ENCODE measurements at regions of chr22 and their contacts with region 1.

Region 1: DNA sequence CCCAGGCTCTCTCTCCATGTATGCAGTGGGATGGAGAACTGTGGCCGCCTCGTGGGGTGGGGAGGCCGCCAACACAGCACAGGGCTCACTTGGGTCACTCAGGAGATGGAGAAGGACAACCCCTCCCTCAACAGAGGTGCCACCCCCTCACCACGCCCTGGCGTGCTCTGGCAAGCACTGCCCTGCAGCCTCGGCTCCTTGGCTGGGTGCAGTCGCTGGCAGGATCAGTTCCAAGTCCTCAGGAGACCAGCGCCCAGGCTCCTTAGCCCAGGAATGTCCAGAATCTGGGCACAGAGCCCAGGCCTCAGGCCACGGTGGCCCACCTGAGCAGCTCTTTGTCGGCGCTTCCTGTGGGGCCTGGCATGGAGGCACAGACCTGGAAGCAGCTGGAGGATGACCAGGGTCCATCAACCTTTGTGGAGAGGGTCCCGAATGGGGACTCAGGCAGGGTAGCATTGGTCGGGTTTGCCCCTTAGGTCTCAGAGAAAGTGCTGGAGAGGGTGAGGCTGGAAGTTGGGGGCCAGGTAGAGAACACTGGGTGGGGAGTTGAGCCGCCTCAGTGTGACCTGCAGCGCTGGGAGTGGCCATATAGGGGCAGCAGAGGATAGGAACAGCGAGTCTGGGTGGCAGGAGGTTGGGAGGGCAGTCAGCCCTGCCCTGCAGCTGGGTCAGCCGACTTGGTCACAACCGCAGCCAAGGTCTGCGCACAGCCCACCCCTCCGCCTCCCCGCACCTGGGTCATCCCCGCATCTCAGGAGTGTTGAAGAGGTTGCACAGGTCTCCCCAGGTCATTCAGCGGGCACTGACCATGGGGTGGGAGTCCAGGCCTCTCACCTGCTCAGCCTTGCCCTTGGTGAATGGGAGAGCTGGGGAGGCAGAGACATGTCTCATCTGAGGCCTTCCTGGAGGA is 8.2 kb downstream of the SUSD2 start:
- DNase-seq: peak; percentile 86
- ATAC-seq: peak; percentile 97
- H3K4me3 Mint-ChIP-seq: no peak overlapping the region
- H3K27ac Mint-ChIP-seq: no peak overlapping the region
- H3K4me1 Mint-ChIP-seq: peaks cover 3% of the 10 kb centered on the region; the same call in 1 of the 2 replicates
- H3K27me3 Mint-ChIP-seq: no peaks in the 10 kb centered on the region; the same call in 1 of the 2 replicates
- CTCF ChIP-seq: peak; percentile 65; the same call in 1 of the 2 replicates

Region 2: DNA sequence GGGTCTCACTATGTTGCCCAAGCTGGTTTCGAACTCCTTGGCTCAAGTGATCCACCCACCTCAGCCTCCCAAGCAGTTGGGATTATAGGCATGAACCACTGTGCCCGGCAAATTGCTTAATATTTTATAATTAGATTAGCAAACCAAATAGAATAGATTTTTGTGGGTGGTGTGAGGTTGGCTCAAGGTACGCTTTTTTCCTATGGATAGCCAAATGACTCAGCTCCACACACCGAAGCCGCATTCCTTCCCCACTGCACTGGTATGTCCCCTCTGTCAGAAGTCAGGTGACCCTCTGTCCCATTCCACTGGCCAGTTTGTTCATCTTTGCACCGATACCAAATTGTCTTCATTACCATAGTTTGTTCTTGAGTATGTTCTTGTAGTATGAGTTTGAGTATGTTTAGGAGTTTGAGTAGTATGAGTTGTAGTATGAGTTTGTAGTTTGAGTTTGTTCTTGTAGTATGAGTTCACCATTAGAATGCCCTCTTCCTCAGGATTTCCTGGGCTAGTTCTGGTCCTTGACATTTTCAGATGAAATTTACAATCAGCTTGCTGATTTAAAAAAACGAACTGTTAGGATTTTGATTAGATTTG is 11.2 kb after region 1 on chr22:
- CTCF ChIA-PET with region 1: interaction called, 10 read pairs
- POLR2A ChIA-PET with region 1: no interaction called
- DNase-seq: no peak
- ATAC-seq: no peak
- H3K4me3 Mint-ChIP-seq: no peak overlapping the region
- H3K27ac Mint-ChIP-seq: no peak overlapping the region
- H3K4me1 Mint-ChIP-seq: peaks cover 12% of the 10 kb centered on the region; the same call in 1 of the 2 replicates
- H3K27me3 Mint-ChIP-seq: peaks cover 4% of the 10 kb centered on the region; the same call in 1 of the 2 replicates
- CTCF ChIP-seq: no peak

Region 3: DNA sequence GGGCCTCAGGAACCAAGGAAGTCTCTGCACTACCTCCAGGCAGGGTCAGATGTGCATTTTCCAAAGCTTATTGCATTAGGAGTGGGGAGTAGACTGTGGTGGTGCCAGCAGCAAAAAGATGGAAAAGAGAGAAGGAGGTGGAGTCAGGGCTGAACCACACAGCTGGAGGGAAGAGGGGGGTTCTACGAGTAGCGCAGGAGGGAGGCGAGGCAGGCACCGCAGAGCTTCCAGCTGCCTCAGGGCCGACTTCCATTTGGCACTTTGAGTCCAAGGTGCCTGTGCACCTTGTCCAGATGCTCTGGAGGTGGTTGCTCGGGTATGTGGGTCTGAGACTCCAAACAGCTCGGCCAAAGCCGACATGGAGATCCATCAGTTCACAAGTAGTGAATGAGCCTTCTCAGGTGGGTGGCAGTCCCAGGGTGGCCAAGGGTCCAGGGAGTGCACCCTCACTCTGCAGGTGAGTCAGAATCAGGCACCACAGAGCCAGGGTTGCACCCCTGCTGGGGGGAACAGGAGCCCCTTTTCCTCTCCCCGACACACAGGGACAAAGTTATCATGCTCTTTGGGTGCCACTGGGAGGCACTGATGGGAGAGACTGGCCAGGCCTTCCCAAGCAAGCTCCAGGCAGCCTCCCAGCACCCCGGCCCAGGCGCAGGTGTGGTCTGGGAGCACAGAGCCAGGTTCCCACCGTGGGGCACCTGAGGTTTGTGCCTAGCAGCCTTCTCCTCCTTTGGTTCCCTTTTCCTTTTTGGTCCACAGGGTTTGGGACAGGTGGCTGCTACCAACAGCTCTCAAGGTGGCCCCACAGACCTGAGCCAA is 25.2 kb after region 1 on chr22:
- CTCF ChIA-PET with region 1: interaction called, 12 read pairs
- POLR2A ChIA-PET with region 1: no interaction called
- DNase-seq: no peak
- ATAC-seq: no peak; the same call in none of the 2 replicates
- H3K4me3 Mint-ChIP-seq: no peak overlapping the region
- H3K27ac Mint-ChIP-seq: no peak overlapping the region
- H3K4me1 Mint-ChIP-seq: peaks cover 13% of the 10 kb centered on the region
- H3K27me3 Mint-ChIP-seq: no peaks in the 10 kb centered on the region; the same call in 1 of the 2 replicates
- CTCF ChIP-seq: no peak

Region 4: DNA sequence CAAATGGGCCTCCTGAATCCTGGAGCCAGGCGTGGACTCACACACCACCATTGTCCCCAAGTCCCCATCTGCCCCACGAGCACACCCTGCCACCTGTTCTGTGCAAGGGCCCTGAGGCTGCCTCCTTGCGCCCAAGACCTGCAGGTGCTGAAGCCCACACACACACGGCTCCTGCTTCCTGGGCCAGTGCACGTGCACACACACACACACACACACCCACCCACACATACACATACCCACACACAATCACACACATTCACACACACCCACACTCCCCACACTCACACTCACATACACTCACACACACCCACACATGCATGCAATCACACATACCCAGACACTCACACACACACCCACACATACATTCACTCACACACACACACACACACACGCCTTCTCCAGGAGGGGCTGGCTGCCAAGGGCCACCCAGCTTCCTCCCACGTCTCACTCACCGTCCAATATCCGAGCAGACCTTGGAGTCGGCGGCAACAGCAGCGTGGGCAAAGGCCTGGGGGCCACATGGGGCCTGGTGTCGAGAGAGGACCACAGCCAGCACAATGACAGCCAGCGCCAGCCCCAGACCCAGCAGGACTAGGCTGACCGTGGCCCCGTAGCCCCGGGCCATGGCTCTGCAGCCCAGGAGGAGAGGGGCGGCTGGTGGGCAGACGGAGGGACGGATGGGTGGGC is 54.7 kb after region 1 on chr22:
- CTCF ChIA-PET with region 1: interaction called, 62 read pairs
- POLR2A ChIA-PET with region 1: no interaction called
- DNase-seq: no peak
- ATAC-seq: no peak
- H3K4me3 Mint-ChIP-seq: no peak overlapping the region
- H3K27ac Mint-ChIP-seq: no peak overlapping the region
- H3K4me1 Mint-ChIP-seq: peaks cover 18% of the 10 kb centered on the region
- H3K27me3 Mint-ChIP-seq: no peaks in the 10 kb centered on the region
- CTCF ChIP-seq: no peak

Measured in WTC11 (cell line).